Pancreas (tissue), 10 donors: ENCODE measurements at regions of chr5 and their contacts with region 1.

Region 1: GRCh38 chr5:59380350-59380951 is 513.1 kb downstream of the PDE4D start:
- DNase-seq: no peak
- ATAC-seq: peak; percentile 81 to 93 (median 92)
- H3K4me3 ChIP-seq: no peak overlapping the region
- H3K27ac ChIP-seq: no peak overlapping the region
- H3K4me1 ChIP-seq: peaks cover 0 to 4% (median 4%) of the 10 kb centered on the region in 3 donors
- H3K27me3 ChIP-seq: no peaks in the 10 kb centered on the region
- CTCF ChIP-seq: peak in 2 of 4 donors; percentile 33 to 44

Region 2: GRCh38 chr5:58294598-58295305 is 1085.7 kb before region 1 on chr5:
- intact Hi-C with region 1: no loop called
- DNase-seq: no peak
- ATAC-seq: no peak
- H3K4me3 ChIP-seq: no peak overlapping the region
- H3K27ac ChIP-seq: no peak overlapping the region
- H3K4me1 ChIP-seq: no peaks in the 10 kb centered on the region
- H3K27me3 ChIP-seq: no peaks in the 10 kb centered on the region
- CTCF ChIP-seq: no peak

Region 3: GRCh38 chr5:59673438-59674058 is 293.1 kb after region 1 on chr5:
- intact Hi-C with region 1: loop called in 1 of 3 experiments (anchors 10 kb)
- DNase-seq: no peak
- ATAC-seq: peak; percentile 48 to 75 (median 72)
- H3K4me3 ChIP-seq: no peak overlapping the region
- H3K27ac ChIP-seq: no peak overlapping the region
- H3K4me1 ChIP-seq: no peaks in the 10 kb centered on the region
- H3K27me3 ChIP-seq: no peaks in the 10 kb centered on the region
- CTCF ChIP-seq: peak; percentile 60 to 82 (median 65)

Region 4: DNA sequence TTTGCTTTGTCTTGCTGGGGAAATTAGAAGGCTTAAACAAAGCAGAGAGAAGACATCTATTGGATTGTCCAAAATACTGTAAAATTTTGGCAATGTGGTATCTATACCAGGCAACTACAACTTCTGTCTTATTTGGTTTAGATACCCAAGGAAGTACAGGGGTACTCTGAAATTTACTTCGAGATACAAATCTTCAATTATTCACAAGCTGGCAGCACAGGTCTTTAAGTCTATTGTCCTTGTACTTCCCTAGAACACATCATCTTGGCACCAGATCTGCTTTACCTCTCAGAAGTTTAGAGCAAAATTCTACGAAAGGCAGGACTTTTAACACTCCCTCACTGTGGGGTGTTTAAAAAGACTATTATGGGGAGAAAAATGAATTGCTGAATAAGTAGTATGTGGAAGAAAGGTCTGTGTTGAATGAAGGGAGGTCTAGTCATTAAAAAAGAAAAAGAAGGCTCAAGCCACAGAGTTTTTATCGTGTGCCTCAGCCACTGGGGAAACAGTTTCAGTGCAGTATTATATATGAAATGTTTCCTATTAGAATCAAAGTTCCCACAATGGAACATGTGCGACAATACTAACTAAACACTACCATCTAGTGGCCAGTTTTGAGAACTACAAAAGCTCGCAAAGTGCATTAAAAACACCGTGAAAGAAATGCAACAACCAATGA is 419.4 kb after region 1 on chr5:
- intact Hi-C with region 1: loop called in 2 of 3 experiments (anchors 10 kb)
- DNase-seq: peak in 1 of 6 donors; percentile 37
- ATAC-seq: peak; percentile 71 to 96 (median 90)
- H3K4me3 ChIP-seq: no peak overlapping the region
- H3K27ac ChIP-seq: peak overlapping the region in 2 of 4 donors; percentile 10 to 56
- H3K4me1 ChIP-seq: peaks cover 0 to 12% (median 0%) of the 10 kb centered on the region in 3 donors
- H3K27me3 ChIP-seq: no peaks in the 10 kb centered on the region
- CTCF ChIP-seq: peak; percentile 60 to 78 (median 71)